ENCODE measurements at regions of chr3 and their contacts with region 1.

Region 1: DNA sequence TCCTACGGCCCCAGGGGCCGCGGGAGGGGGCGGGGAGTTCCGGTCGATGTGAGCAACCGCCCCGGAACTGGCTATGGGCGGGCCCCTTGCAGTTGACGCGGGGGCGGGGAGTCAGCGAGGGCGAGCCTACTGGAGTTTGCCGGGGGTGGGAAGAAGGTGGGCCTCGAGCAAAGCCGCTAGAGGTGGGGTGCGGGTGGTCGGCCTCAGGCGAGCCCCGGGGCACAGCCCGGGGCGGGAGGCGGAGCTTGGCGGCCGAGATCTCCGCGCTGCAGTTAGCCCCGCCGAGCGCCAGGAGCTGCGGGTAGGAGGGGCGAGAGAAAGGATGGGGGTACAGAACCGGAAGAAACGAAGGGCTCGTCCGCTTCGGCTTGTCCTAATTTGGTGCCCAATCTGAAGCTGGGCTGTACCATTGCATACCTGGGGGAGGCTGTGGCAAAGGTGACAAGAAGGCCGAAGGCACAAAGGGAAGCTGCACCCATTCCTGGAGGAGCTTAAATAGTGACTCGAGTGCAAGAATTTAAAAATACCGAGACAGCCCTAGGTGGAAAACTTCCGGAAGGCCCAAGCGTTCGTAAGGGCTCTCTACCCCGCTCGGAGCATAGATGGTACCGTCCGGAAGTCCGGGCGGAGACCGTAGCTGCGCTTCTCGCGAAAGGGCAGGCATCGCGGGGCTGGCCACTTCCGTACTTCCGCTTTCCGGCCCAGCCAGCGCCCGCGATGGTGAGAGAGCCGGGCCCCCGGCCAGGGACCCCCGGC is at the starts of genes ARPC4 and TADA3:
- DNase-seq: peak; percentile 90
- H3K4me3 Mint-ChIP-seq: peak within 1 kb of the TSS; percentile 99
- H3K27ac Mint-ChIP-seq: peak within 1 kb of the TSS; percentile 98
- H3K4me1 Mint-ChIP-seq: peaks cover 55% of the 10 kb centered on the region
- H3K27me3 Mint-ChIP-seq: no peaks in the 10 kb centered on the region
- total RNA-seq, gene ARPC4: 253 and 268 TPM in 2 replicates
- total RNA-seq, gene TADA3: 86.6 and 89.2 TPM in 2 replicates

Region 2: GRCh38 chr3:9649791-9650521 is 142.6 kb before region 1 on chr3:
- intact Hi-C with region 1: loop called (anchors 2 kb)
- DNase-seq: no peak
- H3K4me3 Mint-ChIP-seq: peak overlapping the region; percentile 93
- H3K27ac Mint-ChIP-seq: peak overlapping the region; percentile 84
- H3K4me1 Mint-ChIP-seq: peaks cover 11% of the 10 kb centered on the region
- H3K27me3 Mint-ChIP-seq: no peaks in the 10 kb centered on the region

Region 3: DNA sequence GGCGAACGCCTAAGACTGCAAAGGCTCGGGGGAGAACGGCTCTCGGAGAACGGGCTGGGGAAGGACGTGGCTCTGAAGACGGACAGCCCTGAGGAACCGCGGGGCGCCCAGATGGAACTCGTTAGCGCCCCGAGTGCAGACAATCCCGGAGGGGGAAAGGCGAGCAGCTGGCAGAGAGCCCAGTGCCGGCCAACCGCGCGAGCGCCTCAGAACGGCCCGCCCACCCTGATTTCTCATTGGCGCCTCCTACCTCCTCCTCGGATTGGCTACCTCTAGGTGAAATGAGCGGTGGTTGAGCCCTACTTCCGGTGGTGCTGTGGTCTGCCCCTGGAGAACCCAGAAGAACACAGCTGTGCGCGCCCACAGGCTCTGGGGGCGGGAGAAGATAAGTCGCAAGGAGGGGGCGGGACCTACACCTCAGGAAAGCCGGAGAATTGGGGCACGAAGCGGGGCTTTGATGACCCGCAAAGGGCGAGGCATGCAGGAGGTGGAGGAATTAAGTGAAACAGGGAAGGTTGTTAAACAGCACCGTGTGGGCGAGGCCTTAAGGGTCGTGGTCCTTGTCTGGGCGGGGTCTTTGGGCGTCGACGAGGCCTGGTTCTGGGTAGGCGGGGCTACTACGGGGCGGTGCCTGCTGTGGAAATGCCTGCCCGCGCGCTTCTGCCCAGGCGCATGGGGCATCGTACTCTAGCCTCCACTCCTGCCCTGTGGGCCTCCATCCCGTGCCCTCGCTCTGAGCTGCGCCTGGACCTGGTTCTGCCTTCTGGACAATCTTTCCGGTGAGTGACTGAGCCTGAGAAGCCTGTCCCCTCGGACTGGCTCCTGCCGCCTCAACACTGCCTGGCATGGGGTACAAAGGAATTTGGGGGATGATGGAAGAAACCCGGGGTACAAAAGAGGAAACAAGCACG is 42.7 kb before region 1 on chr3 and contains the start of gene OGG1:
- intact Hi-C with region 1: loop called (anchors 1 kb)
- DNase-seq: peak; percentile 97
- H3K4me3 Mint-ChIP-seq: peak within 1 kb of the TSS; percentile 95
- H3K27ac Mint-ChIP-seq: peak within 1 kb of the TSS; percentile 94
- H3K4me1 Mint-ChIP-seq: peaks cover 28% of the 10 kb centered on the region
- H3K27me3 Mint-ChIP-seq: no peaks in the 10 kb centered on the region
- total RNA-seq, gene OGG1: 33.0 and 38.4 TPM in 2 replicates

Region 4: DNA sequence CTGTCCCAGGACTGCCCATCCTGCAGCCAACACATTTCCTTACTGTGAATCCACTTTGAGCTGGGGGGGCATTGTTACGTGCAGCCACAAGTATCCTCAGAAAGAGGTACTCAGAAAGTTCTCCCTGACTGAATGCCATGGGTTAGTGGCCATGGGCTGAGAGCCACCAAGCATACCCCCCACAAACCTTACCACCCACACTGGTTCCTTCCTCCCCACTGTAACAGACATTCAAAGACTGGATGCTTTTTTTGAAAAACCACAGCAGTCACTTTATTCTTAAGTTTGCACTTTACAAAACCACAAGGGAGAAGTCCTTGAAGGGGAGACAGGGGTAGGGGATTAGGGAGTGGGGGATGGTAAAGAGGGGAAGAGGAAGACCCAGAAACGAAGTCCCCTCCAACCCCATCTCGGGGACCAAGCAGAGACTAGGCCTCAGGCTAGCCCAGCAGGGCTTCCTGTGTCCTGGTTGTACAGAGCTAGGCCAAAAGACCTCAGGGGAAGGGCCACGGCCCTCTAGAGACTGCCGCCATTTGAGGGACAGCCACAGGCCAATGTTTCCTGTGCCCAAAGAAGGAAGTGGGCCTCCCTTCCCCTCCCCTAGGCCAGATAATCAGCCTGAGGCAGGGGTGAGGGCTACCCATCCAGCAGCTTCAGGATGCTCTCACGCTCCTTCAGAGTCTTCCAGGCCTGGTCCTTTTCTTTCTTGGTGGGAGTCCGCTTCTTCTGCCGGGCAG is 12.7 kb before region 1 on chr3:
- intact Hi-C with region 1: loop called (anchors 1 kb)
- DNase-seq: peak; percentile 28
- H3K4me3 Mint-ChIP-seq: peak overlapping the region; percentile 62
- H3K27ac Mint-ChIP-seq: peak overlapping the region; percentile 98
- H3K4me1 Mint-ChIP-seq: peaks cover 58% of the 10 kb centered on the region
- H3K27me3 Mint-ChIP-seq: no peaks in the 10 kb centered on the region

Region 5: GRCh38 chr3:10248184-10249080 is 455.8 kb after region 1 on chr3 and contains the start of gene TATDN2:
- intact Hi-C with region 1: loop called (anchors 10 kb)
- DNase-seq: peak; percentile 94
- H3K4me3 Mint-ChIP-seq: peak within 1 kb of the TSS; percentile 95
- H3K27ac Mint-ChIP-seq: peak within 1 kb of the TSS; percentile 97
- H3K4me1 Mint-ChIP-seq: peaks cover 47% of the 10 kb centered on the region
- H3K27me3 Mint-ChIP-seq: no peaks in the 10 kb centered on the region
- total RNA-seq, gene TATDN2: 64.9 and 65.6 TPM in 2 replicates